ENCODE measurements at regions of chr10 and their contacts with region 1.

Region 1: DNA sequence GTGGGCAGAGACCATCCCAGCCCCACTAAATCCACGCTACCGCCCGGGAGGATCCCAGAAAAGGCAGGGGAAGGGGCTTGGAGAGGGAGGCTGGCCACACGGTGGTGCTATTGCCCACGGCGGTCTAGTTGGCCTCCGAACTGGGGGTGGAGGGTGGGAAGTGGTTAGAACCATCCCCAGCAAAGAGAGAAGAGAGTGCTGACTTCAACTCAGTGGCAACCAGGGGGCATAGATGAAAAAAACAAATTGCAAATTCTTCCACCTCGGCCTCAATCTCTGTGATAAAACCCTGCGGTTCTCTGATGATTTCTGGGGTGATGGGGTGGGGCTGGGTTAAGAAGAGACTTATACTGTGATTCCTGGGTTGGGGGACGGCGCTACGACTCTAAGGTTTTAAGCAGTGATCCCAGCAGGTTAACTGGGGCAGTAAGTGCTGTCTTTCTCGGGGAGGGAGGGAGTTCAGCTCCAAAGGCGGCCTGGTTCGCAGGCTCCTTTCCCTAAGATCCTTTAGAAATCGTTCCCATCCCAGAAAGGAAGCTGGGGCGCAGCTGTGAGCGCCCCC is 154.5 kb upstream of the LYZL2 start:
- DNase-seq: peak; percentile 91
- H3K4me3 Mint-ChIP-seq: peak overlapping the region; percentile 62
- H3K27ac Mint-ChIP-seq: peak overlapping the region; percentile 45
- H3K4me1 Mint-ChIP-seq: peaks cover 18% of the 10 kb centered on the region
- H3K27me3 Mint-ChIP-seq: no peaks in the 10 kb centered on the region

Region 2: GRCh38 chr10:31490858-31491504 is 707.0 kb after region 1 on chr10:
- CTCF ChIA-PET with region 1: interaction called, 24 read pairs
- POLR2A ChIA-PET with region 1: no interaction called
- intact Hi-C with region 1: loop called (anchors 5 kb)
- DNase-seq: no peak
- H3K4me3 Mint-ChIP-seq: no peak overlapping the region
- H3K27ac Mint-ChIP-seq: no peak overlapping the region
- H3K4me1 Mint-ChIP-seq: no peaks in the 10 kb centered on the region
- H3K27me3 Mint-ChIP-seq: no peaks in the 10 kb centered on the region

Region 3: GRCh38 chr10:31770307-31770902 is 986.4 kb after region 1 on chr10:
- CTCF ChIA-PET with region 1: interaction called, 26 read pairs
- POLR2A ChIA-PET with region 1: no interaction called
- intact Hi-C with region 1: no loop called
- DNase-seq: peak; percentile 69
- H3K4me3 Mint-ChIP-seq: no peak overlapping the region
- H3K27ac Mint-ChIP-seq: no peak overlapping the region
- H3K4me1 Mint-ChIP-seq: no peaks in the 10 kb centered on the region
- H3K27me3 Mint-ChIP-seq: no peaks in the 10 kb centered on the region